Heart left ventricle (tissue), 16 donors: ENCODE measurements at regions of chr14 and their contacts with region 1.

Region 1: GRCh38 chr14:105490572-105491366 is at the start of gene TEDC1:
- DNase-seq: peak; percentile 100
- ATAC-seq: peak; percentile 78 to 91 (median 87)
- H3K4me3 ChIP-seq: peak within 1 kb of the TSS; percentile 40 to 86 (median 72)
- H3K27ac ChIP-seq: peak within 1 kb of the TSS; percentile 51 to 100 (median 96)
- H3K4me1 ChIP-seq: peaks cover 13 to 70% (median 49%) of the 10 kb centered on the region in 12 donors
- H3K27me3 ChIP-seq: no peaks in the 10 kb centered on the region
- CTCF ChIP-seq: peak; percentile 54 to 98 (median 88)
- POLR2A ChIP-seq: peak in 1 of 2 donors; percentile 40
- total RNA-seq, gene TEDC1: 0.94 to 12.4 (median 3.2) TPM

Region 2: DNA sequence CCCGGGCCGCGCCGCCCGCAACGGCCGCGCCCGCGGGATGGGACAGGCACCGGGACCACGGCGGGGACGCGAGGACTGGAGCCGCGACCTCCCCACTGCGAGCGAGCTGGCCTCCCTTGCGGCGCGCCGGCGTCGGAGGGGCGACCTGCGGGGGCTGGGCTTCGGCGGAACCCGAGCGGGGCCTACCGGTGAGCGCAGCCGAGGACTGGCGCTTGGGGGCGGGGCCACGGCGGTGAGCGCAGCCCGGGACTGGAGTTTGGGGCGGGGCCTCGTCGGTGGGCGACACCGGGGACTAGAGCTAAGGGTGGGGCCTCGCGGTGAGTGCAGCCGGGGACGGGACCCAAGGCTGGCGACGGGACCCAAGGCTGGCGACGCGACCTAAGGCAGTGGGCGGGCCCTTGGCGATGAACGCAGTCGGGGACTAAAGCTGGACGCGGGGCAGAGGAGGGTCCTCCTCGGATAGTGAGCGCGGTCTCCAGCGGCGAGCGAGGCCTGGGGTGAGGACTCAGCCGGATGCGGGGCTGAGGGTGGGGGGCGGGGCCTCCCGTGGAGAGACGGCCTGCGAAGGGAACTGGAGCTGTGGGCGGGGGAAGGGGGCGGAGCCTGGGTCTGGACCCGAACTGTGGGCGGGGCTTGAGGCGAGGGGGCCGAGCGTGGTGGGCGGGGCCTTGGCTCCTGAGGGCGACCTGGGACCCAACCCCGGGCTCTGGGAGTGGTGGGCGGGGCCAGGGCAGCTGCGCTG is 189.8 kb before region 1 on chr14 and contains the start of gene BRF1:
- intact Hi-C with region 1: loop called in 1 of 10 experiments (anchors 5 kb)
- DNase-seq: peak; percentile 98 to 100 (median 98)
- ATAC-seq: peak; percentile 94 to 98 (median 96)
- H3K4me3 ChIP-seq: peak within 1 kb of the TSS; percentile 61 to 98 (median 88)
- H3K27ac ChIP-seq: peak within 1 kb of the TSS; percentile 85 to 99 (median 94)
- H3K4me1 ChIP-seq: peaks cover 0 to 42% (median 16%) of the 10 kb centered on the region in 12 donors
- H3K27me3 ChIP-seq: no peaks in the 10 kb centered on the region
- CTCF ChIP-seq: no peak
- POLR2A ChIP-seq: peak in 1 of 2 donors; percentile 72
- total RNA-seq, gene BRF1: 13.3 to 25.3 (median 18.7) TPM

Region 3: GRCh38 chr14:105330491-105330895 is 160.3 kb before region 1 on chr14:
- intact Hi-C with region 1: no loop called
- DNase-seq: peak in 1 of 5 donors; percentile 53
- ATAC-seq: peak in 1 of 4 donors; percentile 23
- H3K4me3 ChIP-seq: no peak overlapping the region
- H3K27ac ChIP-seq: peak overlapping the region in 5 of 12 donors; percentile 53 to 84 (median 63)
- H3K4me1 ChIP-seq: peaks cover 17 to 93% (median 70%) of the 10 kb centered on the region in 12 donors
- H3K27me3 ChIP-seq: no peaks in the 10 kb centered on the region
- CTCF ChIP-seq: no peak
- POLR2A ChIP-seq: no peak

Region 4: GRCh38 chr14:105369653-105370040 is 121.1 kb before region 1 on chr14:
- intact Hi-C with region 1: loop called (anchors 1 to 5 kb)
- DNase-seq: no peak
- ATAC-seq: no peak
- H3K4me3 ChIP-seq: no peak overlapping the region
- H3K27ac ChIP-seq: no peak overlapping the region
- H3K4me1 ChIP-seq: peaks cover 0 to 6% (median 0%) of the 10 kb centered on the region in 12 donors
- H3K27me3 ChIP-seq: no peaks in the 10 kb centered on the region
- CTCF ChIP-seq: no peak
- POLR2A ChIP-seq: no peak

Region 5: DNA sequence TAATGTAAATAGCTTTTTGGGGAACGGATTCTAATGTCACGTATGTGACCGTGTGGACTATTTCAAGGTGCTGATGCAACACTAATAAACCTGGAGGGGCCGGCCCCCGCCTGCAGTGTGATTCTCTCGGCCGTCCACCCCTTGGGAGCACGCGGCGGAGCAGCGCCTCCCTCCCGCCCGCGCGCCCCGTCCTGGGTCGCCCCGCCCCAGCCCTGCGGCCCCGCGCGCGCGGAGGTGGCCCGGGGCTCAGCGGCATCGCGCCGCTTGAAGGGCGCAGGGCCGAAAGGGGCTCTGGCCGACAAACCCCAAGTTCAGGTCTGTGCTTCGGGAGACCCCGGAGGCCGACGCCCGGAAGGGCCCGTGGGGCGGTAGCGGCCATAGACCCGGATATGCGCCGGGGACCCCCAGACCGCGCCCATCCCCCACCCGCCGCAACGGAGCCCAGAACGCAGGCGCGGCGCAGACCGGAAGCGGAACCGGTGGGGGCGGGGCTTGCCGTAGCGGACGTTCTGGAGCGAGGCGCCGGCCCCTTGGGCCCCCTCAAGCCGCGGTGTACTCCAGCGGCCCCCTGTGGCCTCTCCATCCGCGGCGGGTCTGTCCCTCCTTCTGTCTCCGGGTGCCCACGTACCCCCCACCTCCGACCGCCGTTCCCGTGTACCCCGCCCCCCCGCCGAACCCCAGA is 92.6 kb before region 1 on chr14 and contains the start of gene TEX22:
- intact Hi-C with region 1: loop called in 1 of 10 experiments (anchors 1 kb)
- DNase-seq: peak; percentile 92 to 96 (median 95)
- ATAC-seq: peak; percentile 74 to 94 (median 90)
- H3K4me3 ChIP-seq: peak within 1 kb of the TSS; percentile 74 to 99 (median 85)
- H3K27ac ChIP-seq: peak within 1 kb of the TSS; percentile 74 to 97 (median 91)
- H3K4me1 ChIP-seq: peaks cover 0 to 42% (median 23%) of the 10 kb centered on the region in 12 donors
- H3K27me3 ChIP-seq: no peaks in the 10 kb centered on the region
- CTCF ChIP-seq: peak in 10 of 12 donors; percentile 7 to 53 (median 42)
- POLR2A ChIP-seq: peak in 1 of 2 donors; percentile 78
- total RNA-seq, gene TEX22: 0.14 to 1.8 (median 0.82) TPM in 7 of 9 donors, not detected in the others

Region 6: DNA sequence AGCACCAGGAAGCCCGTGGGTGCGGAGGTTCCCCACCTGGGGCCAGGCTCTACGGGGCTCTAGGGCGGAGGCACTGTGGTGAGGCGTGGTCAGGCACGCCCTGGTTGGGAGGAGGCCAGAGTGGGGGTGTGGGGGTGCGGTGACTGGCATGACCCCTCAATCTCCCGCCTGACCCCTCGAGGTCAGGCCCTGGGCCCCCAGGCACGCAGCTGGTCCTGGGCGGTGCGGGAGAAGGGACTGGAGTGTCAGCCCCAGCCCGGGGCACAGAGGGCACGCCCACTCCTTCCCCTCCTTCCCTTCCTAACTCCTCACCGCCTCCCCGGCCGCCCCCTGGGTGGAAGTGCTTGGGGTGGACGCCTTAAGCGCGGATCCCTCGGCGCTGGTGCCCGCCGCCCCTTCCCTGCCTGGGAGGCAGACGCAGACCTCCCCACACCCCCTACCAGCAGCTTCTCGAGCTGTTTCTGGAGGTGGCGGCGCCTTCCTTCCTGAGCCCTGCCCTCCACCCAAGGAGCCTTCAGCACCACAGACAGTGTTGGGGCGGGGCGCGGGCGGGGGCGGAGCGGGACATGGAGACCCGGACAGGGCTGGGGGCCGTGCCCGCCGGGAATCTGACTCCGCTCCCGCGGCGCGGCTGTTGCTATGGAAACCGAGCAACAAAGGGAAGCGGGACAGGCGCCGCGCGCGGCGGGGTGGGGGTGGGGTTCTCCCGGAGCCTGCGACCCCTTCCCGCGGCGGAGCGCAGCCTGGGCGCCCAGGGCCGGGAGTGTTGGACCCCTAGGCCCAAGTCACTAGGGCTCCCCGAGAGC is 16.9 kb before region 1 on chr14:
- intact Hi-C with region 1: loop called in 2 of 10 experiments (anchors 2 kb)
- DNase-seq: peak; percentile 97 to 99 (median 98)
- ATAC-seq: peak; percentile 19 to 53 (median 50)
- H3K4me3 ChIP-seq: peak overlapping the region; percentile 43 to 100 (median 71)
- H3K27ac ChIP-seq: peak overlapping the region; percentile 87 to 100 (median 97)
- H3K4me1 ChIP-seq: peaks cover 0 to 80% (median 60%) of the 10 kb centered on the region in 12 donors
- H3K27me3 ChIP-seq: peaks cover 0 to 26% (median 0%) of the 10 kb centered on the region in 9 donors
- CTCF ChIP-seq: no peak
- POLR2A ChIP-seq: peak in 1 of 2 donors; percentile 39

Region 7: DNA sequence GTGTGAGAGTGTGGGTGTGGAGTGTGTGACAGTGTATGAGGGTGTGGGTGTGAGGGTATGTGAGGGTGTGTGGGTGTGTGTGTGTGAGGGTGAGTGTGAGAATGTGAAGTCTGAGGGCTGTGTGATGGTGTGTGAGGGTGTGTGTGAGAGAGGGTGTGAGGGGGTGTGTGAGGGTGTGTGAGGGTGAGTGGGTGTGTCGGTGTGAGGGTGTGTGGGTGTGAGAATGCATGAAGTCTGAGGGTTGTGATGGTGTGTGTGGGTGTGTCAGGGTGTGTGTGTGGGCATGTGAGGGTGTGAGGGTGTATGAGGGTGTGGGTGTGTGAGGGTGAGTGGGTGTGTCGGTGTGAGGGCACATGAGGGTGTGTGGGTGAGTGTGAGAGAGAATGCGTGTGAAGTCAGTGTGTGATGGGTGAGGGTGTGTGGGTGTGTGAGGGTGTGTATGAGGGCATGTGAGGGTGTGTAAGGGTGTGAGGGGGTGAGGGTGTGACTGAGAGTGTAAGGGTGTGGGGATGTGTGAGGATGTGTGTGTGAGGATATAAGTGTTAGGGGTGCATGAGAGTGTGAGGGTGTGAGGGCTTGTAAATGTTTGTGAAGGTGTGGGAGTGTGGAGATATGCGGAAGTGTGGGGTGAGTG is 72.1 kb after region 1 on chr14:
- intact Hi-C with region 1: no loop called
- DNase-seq: no peak
- ATAC-seq: no peak
- H3K4me3 ChIP-seq: no peak overlapping the region
- H3K27ac ChIP-seq: no peak overlapping the region
- H3K4me1 ChIP-seq: no peaks in the 10 kb centered on the region
- H3K27me3 ChIP-seq: no peaks in the 10 kb centered on the region
- CTCF ChIP-seq: no peak
- POLR2A ChIP-seq: no peak